CD8-positive, alpha-beta T cell (primary cell): ENCODE measurements at regions of chr15 and their contacts with region 1.

Region 1: GRCh38 chr15:99250494-99251435 is 516 bp upstream of the LRRC28 start:
- DNase-seq: peak; percentile 83 to 98 (median 92)
- ATAC-seq: peak; percentile 95
- H3K4me3 ChIP-seq: peak overlapping the region; percentile 55 to 59
- H3K4me3 Mint-ChIP-seq: peak overlapping the region; percentile 90
- H3K27ac ChIP-seq: peak overlapping the region; percentile 25 to 79
- H3K27ac Mint-ChIP-seq: peak overlapping the region; percentile 89
- H3K4me1 ChIP-seq: peaks cover 19% of the 10 kb centered on the region
- H3K4me1 Mint-ChIP-seq: peaks cover 29% of the 10 kb centered on the region
- H3K27me3 ChIP-seq: no peaks in the 10 kb centered on the region
- H3K27me3 Mint-ChIP-seq: no peaks in the 10 kb centered on the region
- CTCF ChIP-seq: no peak

Region 2: DNA sequence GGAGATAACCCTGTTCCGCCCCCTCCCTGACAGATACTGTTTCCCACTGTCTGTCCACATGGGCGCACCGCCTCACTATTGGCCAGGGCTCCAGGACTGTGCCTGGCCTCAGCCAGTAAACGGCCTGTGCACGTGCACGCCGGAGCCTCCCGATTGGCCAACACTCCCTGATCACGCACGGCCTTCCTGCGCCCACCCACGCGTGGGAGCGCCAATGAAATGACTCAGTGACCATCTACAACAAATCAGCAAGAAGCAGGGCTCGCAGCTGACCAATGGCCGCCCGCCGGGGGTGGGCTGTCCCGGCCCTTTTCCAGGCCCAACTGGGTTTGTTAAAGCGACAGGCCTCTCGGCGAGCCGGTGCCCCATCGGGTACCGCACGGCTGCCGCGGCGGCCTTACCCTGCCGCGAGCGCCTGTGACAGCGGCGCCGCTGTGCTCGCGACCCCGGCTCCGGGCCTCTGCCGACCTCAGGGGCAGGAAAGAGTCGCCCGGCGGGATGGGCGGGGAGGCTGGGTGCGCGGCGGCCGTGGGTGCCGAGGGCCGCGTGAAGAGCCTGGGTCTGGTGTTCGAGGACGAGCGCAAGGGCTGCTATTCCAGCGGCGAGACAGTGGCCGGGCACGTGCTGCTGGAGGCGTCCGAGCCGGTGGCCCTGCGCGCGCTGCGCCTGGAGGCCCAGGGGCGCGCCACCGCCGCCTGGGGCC is 1290.2 kb before region 1 on chr15 and contains the start of gene ARRDC4:
- CTCF ChIA-PET with region 1: no interaction called
- POLR2A ChIA-PET with region 1: no interaction called
- intact Hi-C with region 1: loop called in 1 of 2 experiments (anchors 5 kb)
- DNase-seq: peak; percentile 84 to 100 (median 94)
- ATAC-seq: peak; percentile 94
- H3K4me3 ChIP-seq: peak within 1 kb of the TSS; percentile 35 to 55
- H3K4me3 Mint-ChIP-seq: peak within 1 kb of the TSS; percentile 83
- H3K27ac ChIP-seq: peak within 1 kb of the TSS; percentile 62 to 75
- H3K27ac Mint-ChIP-seq: peak within 1 kb of the TSS; percentile 86
- H3K4me1 ChIP-seq: peaks cover 13% of the 10 kb centered on the region
- H3K4me1 Mint-ChIP-seq: peaks cover 19% of the 10 kb centered on the region
- H3K27me3 ChIP-seq: no peaks in the 10 kb centered on the region
- H3K27me3 Mint-ChIP-seq: no peaks in the 10 kb centered on the region
- CTCF ChIP-seq: no peak
- total RNA-seq, gene ARRDC4: 4.2 to 5.1 TPM

Region 3: GRCh38 chr15:99104788-99105513 is 145.8 kb before region 1 on chr15 and contains the start of gene SYNM:
- CTCF ChIA-PET with region 1: no interaction called
- POLR2A ChIA-PET with region 1: no interaction called
- intact Hi-C with region 1: loop called in 1 of 2 experiments (anchors 2 kb)
- DNase-seq: peak in 2 of 9 experiments; percentile 49 to 60
- ATAC-seq: peak; percentile 15
- H3K4me3 ChIP-seq: peak within 1 kb of the TSS in 1 of 2 experiments; percentile 34
- H3K4me3 Mint-ChIP-seq: peak within 1 kb of the TSS; percentile 61
- H3K27ac ChIP-seq: peak within 1 kb of the TSS in 1 of 2 experiments; percentile 43
- H3K27ac Mint-ChIP-seq: peak within 1 kb of the TSS; percentile 45
- H3K4me1 ChIP-seq: no peaks in the 10 kb centered on the region
- H3K4me1 Mint-ChIP-seq: peaks cover 19% of the 10 kb centered on the region
- H3K27me3 ChIP-seq: peaks cover 0 to 5% of the 10 kb centered on the region in 2 experiments
- H3K27me3 Mint-ChIP-seq: peaks cover 33% of the 10 kb centered on the region
- CTCF ChIP-seq: no peak
- total RNA-seq, gene SYNM: 3.3 to 3.9 TPM

Region 4: GRCh38 chr15:100596792-100597191 is 1346.0 kb after region 1 on chr15:
- CTCF ChIA-PET with region 1: no interaction called
- POLR2A ChIA-PET with region 1: no interaction called
- intact Hi-C with region 1: loop called in 1 of 2 experiments (anchors 5 kb)
- DNase-seq: peak; percentile 49 to 95 (median 84)
- ATAC-seq: peak; percentile 86
- H3K4me3 ChIP-seq: peak overlapping the region; percentile 41 to 47
- H3K4me3 Mint-ChIP-seq: peak overlapping the region; percentile 85
- H3K27ac ChIP-seq: peak overlapping the region; percentile 70 to 85
- H3K27ac Mint-ChIP-seq: peak overlapping the region; percentile 97
- H3K4me1 ChIP-seq: peaks cover 88% of the 10 kb centered on the region
- H3K4me1 Mint-ChIP-seq: peaks cover 77% of the 10 kb centered on the region
- H3K27me3 ChIP-seq: no peaks in the 10 kb centered on the region
- H3K27me3 Mint-ChIP-seq: no peaks in the 10 kb centered on the region
- CTCF ChIP-seq: no peak

Region 5: GRCh38 chr15:100602064-100602822 is 1351.5 kb after region 1 on chr15 and contains the starts of genes ASB7 and LINS1:
- CTCF ChIA-PET with region 1: no interaction called
- POLR2A ChIA-PET with region 1: no interaction called
- intact Hi-C with region 1: loop called (anchors 1 to 5 kb)
- DNase-seq: peak; percentile 99 to 100 (median 100)
- ATAC-seq: peak; percentile 89
- H3K4me3 ChIP-seq: peak within 1 kb of the TSS; percentile 90 to 95
- H3K4me3 Mint-ChIP-seq: no peak within 1 kb of the TSS
- H3K27ac ChIP-seq: peak within 1 kb of the TSS; percentile 71 to 94
- H3K27ac Mint-ChIP-seq: peak within 1 kb of the TSS; percentile 93
- H3K4me1 ChIP-seq: peaks cover 58% of the 10 kb centered on the region
- H3K4me1 Mint-ChIP-seq: peaks cover 64% of the 10 kb centered on the region
- H3K27me3 ChIP-seq: no peaks in the 10 kb centered on the region
- H3K27me3 Mint-ChIP-seq: no peaks in the 10 kb centered on the region
- CTCF ChIP-seq: no peak
- total RNA-seq, gene ASB7: 17.2 to 19.9 TPM
- total RNA-seq, gene LINS1: 42.8 to 45.9 TPM